Activated CD4-positive, alpha-beta T cell treated with anti-CD3 and anti-CD28 coated beads, Interleukin-2, amount 10 ng/mL, durations not matched to agents 24 days and 14 days (primary cell): ENCODE measurements at regions of chr5 and their contacts with region 1.

Region 1: GRCh38 chr5:148791334-148791667 is 35.1 kb upstream of the ADRB2 start:
- DNase-seq: peak; percentile 69
- H3K4me3 Mint-ChIP-seq: no peak overlapping the region
- H3K27ac Mint-ChIP-seq: peak overlapping the region; percentile 21
- H3K4me1 Mint-ChIP-seq: peaks cover 24% of the 10 kb centered on the region
- H3K27me3 Mint-ChIP-seq: peaks cover 21% of the 10 kb centered on the region

Region 2: DNA sequence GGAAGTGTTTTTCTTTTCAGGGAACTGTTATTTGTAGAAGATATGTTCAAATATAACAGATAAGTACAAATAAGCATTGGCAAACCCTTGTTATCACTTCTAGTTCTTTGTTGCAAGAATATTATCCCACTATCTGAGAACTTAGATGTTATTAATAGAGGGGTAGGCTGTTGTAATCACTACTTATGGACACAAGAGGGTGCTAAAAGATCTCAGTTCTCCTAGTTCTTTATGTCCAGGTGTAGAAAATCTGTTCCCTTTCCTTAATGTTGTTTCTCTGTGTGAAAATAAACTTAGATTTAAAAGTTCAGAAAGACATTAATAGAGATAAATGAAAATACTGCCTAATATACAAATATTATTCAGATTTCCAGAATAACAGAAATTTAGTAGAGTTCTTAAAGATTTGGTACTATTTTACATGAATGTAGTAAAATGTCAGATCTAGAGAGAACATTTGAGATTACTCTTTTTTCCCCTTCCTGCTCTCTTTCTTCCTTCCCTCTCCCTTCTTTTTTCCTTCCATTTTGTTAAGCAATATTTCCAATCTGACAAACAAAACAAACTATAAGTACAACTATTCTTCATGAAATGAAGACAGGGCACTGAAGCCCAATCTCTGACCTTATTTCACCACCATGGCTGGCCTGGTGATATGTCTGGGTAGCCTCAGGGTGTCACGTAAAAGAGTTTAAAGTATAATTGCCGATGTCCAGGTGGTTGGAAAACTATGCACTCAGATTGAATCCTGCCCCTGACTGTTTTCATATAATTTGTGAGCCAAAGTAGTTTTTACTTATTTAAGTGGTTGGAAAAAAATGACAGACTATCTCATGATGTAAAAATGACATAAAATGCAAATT is 841.4 kb before region 1 on chr5:
- intact Hi-C with region 1: no loop called
- DNase-seq: no peak
- H3K4me3 Mint-ChIP-seq: no peak overlapping the region
- H3K27ac Mint-ChIP-seq: no peak overlapping the region
- H3K4me1 Mint-ChIP-seq: no peaks in the 10 kb centered on the region
- H3K27me3 Mint-ChIP-seq: no peaks in the 10 kb centered on the region

Region 3: DNA sequence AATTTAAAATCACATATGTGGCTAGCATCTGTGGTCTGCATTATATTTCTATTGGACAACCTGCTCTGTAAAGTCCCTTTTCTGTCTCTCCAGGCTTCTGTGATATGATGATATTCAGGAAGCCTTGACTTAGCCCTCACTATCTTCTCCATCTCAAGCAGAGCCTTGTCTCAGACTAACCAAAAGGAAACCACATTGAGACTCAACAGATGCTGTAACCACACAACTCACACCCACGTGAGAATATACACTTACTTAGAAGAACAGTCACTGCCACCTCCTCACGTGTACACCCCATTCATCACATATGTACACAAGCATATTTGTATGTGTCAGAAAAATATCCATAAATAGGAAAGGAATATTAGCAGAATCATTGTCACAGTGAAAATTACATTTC is 170.6 kb before region 1 on chr5:
- intact Hi-C with region 1: loop called (anchors 5 kb)
- DNase-seq: peak; percentile 81
- H3K4me3 Mint-ChIP-seq: peak overlapping the region; percentile 10
- H3K27ac Mint-ChIP-seq: peak overlapping the region; percentile 55
- H3K4me1 Mint-ChIP-seq: peaks cover 25% of the 10 kb centered on the region
- H3K27me3 Mint-ChIP-seq: peaks cover 36% of the 10 kb centered on the region

Region 4: DNA sequence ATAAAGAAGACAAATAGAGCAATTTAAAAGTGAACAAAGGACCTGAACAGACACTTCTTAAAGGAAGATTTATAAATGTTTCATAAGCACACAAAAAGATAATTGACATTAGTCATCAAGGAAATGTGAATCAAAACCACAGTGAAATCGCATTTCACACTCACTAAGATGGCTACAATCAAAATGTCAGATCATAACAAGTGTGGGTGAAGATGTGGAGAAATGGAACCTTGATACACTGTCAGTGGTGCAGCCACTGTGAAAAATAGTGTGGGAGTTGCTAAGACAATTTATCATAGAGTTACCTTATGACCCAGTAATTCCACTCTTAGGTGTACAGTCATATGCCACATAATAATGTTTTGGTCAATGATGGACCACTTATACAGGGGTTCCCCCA is 82.4 kb before region 1 on chr5:
- intact Hi-C with region 1: loop called (anchors 1 kb)
- DNase-seq: no peak
- H3K4me3 Mint-ChIP-seq: no peak overlapping the region
- H3K27ac Mint-ChIP-seq: no peak overlapping the region
- H3K4me1 Mint-ChIP-seq: peaks cover 19% of the 10 kb centered on the region
- H3K27me3 Mint-ChIP-seq: peaks cover 5% of the 10 kb centered on the region

Region 5: DNA sequence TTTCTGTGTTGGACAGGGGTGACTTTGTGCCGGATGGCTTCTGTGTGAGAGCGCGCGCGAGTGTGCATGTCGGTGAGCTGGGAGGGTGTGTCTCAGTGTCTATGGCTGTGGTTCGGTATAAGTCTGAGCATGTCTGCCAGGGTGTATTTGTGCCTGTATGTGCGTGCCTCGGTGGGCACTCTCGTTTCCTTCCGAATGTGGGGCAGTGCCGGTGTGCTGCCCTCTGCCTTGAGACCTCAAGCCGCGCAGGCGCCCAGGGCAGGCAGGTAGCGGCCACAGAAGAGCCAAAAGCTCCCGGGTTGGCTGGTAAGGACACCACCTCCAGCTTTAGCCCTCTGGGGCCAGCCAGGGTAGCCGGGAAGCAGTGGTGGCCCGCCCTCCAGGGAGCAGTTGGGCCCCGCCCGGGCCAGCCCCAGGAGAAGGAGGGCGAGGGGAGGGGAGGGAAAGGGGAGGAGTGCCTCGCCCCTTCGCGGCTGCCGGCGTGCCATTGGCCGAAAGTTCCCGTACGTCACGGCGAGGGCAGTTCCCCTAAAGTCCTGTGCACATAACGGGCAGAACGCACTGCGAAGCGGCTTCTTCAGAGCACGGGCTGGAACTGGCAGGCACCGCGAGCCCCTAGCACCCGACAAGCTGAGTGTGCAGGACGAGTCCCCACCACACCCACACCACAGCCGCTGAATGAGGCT is 34.9 kb after region 1 on chr5 and contains the start of gene ADRB2:
- intact Hi-C with region 1: loop called (anchors 1 kb)
- DNase-seq: peak; percentile 96
- H3K4me3 Mint-ChIP-seq: peak within 1 kb of the TSS; percentile 90
- H3K27ac Mint-ChIP-seq: peak within 1 kb of the TSS; percentile 65
- H3K4me1 Mint-ChIP-seq: peaks cover 11% of the 10 kb centered on the region
- H3K27me3 Mint-ChIP-seq: peaks cover 73% of the 10 kb centered on the region
- total RNA-seq, gene ADRB2: 0.37 and 0.50 TPM in 2 replicates